Mammary epithelial cell (primary cell): ENCODE measurements at regions of chr2 and their contacts with region 1.

Region 1: DNA sequence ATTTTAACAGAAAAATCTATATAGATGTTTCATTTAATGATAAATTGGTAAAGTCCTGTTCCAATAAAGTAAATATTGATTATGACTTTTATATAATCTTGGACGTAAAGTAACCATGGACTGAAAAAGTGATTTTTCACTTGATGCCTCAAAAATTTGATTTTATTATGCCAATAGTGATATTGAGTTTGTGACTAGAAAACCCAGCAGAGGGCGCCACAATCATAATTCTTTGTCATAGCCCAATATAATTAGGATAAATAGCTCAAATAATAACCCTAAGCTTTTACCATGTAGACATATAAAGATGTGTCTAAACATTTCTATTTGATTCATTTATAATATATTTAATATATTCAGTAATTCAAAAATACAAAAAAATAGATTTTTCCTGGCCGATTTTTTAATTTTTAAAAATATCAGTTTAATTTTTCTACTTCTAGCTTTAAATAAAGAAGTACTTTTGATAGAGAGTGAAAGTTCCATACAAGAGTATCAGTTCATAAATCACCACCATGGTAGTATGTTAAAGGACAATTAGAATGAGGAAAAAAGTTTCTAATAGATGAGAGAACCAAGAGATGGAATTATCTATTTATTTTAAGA is 30.7 kb downstream of the CAMKMT start:
- DNase-seq: peak; percentile 2
- H3K4me3 ChIP-seq: no peak overlapping the region
- H3K27ac ChIP-seq: no peak overlapping the region
- H3K4me1 ChIP-seq: no peaks in the 10 kb centered on the region
- H3K27me3 ChIP-seq: no peaks in the 10 kb centered on the region
- CTCF ChIP-seq: peak; percentile 58 to 71

Region 2: DNA sequence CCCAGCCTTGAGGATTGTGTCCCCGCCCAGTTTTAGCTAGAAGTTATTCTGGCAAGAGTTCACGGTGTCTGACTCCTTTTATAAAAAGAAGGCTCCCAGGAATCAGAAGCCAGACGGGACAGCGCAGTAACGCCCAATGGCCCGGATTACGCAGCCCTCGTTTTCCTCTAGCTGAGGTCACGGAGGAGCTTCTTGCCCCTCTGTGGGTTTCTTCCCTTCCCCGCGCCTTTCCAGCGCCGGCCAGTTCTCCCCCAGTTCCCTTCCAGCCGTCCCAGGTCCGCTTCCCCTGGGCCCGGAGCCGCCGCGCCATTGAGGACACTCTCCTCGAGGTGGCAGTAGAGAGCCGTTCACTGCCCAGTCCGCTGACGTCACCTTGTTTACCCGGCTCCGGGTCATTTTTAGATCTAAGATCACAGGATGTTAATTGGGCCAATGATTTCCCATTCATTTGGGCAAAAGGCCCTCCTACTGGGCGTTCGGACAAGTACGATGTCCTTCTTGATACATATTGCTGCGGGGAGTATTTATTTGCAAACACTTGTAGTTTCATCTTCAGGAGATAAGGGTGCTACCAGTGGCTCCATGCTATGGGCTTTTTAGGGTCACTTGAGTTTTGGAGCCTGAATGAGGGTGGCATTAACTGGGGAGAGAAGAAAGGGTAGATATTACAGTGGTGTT is 305.3 kb before region 1 on chr2:
- CTCF ChIA-PET with region 1: no interaction called
- dilution Hi-C with region 1: no loop called
- in situ Hi-C with region 1: no loop called
- intact Hi-C with region 1: loop called (anchors 1 kb)
- DNase-seq: peak; percentile 56
- H3K4me3 ChIP-seq: peak overlapping the region in 1 of 3 experiments; percentile 16
- H3K27ac ChIP-seq: no peak overlapping the region
- H3K4me1 ChIP-seq: no peaks in the 10 kb centered on the region
- H3K27me3 ChIP-seq: no peaks in the 10 kb centered on the region
- CTCF ChIP-seq: peak; percentile 86 to 94

Region 3: DNA sequence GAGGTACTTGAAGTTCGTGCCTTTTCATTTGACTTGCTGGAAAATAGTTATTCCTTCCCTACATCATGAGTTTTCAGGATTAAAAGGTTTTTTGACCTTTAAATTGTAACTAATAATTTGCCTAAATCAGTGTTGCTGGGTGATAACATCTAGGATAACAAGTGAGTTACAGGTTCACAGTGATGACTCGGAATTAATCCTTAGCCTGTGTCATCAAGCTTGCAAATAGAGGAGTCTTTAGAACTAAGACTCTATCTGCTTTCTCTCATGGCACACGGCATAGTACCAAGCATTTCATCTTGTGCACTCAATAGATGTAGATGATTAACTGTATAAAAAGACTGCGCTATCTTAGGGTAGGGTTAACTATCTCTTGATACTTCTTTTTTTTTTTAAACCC is 48.8 kb after region 1 on chr2:
- CTCF ChIA-PET with region 1: interaction called, 4 read pairs
- dilution Hi-C with region 1: loop called (anchors 10 kb)
- in situ Hi-C with region 1: no loop called
- intact Hi-C with region 1: no loop called
- DNase-seq: peak; percentile 35
- H3K4me3 ChIP-seq: no peak overlapping the region
- H3K27ac ChIP-seq: no peak overlapping the region
- H3K4me1 ChIP-seq: no peaks in the 10 kb centered on the region
- H3K27me3 ChIP-seq: no peaks in the 10 kb centered on the region
- CTCF ChIP-seq: no peak

Region 4: GRCh38 chr2:44495544-44495943 is 103.1 kb after region 1 on chr2:
- CTCF ChIA-PET with region 1: no interaction called
- dilution Hi-C with region 1: no loop called
- in situ Hi-C with region 1: no loop called
- intact Hi-C with region 1: no loop called
- DNase-seq: no peak
- H3K4me3 ChIP-seq: no peak overlapping the region
- H3K27ac ChIP-seq: no peak overlapping the region
- H3K4me1 ChIP-seq: no peaks in the 10 kb centered on the region
- H3K27me3 ChIP-seq: no peaks in the 10 kb centered on the region
- CTCF ChIP-seq: no peak

Region 5: DNA sequence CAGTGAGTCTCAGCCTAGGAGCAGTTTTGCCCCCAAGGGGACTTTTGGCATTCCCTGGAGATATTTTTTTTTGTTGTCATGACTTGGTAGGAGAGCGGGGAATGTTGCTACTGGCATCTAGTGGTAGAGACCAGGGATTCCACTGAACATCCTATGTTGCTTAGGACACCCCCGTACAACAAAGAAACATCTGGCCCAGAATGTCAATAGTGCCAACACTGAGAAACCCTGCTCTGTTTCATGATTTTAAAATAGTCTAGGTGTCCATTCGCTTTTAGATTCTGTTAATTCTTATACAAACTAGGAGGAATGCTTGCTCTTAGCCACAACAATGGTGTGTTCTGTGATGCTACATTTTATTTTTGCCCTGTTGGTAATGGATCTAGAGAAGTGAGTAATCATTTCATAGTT is 323.2 kb after region 1 on chr2:
- CTCF ChIA-PET with region 1: no interaction called
- dilution Hi-C with region 1: no loop called
- in situ Hi-C with region 1: no loop called
- intact Hi-C with region 1: loop called (anchors 2 kb)
- DNase-seq: peak; percentile 56
- H3K4me3 ChIP-seq: no peak overlapping the region
- H3K27ac ChIP-seq: no peak overlapping the region
- H3K4me1 ChIP-seq: no peaks in the 10 kb centered on the region
- H3K27me3 ChIP-seq: no peaks in the 10 kb centered on the region
- CTCF ChIP-seq: peak; percentile 50 to 82

Region 6: DNA sequence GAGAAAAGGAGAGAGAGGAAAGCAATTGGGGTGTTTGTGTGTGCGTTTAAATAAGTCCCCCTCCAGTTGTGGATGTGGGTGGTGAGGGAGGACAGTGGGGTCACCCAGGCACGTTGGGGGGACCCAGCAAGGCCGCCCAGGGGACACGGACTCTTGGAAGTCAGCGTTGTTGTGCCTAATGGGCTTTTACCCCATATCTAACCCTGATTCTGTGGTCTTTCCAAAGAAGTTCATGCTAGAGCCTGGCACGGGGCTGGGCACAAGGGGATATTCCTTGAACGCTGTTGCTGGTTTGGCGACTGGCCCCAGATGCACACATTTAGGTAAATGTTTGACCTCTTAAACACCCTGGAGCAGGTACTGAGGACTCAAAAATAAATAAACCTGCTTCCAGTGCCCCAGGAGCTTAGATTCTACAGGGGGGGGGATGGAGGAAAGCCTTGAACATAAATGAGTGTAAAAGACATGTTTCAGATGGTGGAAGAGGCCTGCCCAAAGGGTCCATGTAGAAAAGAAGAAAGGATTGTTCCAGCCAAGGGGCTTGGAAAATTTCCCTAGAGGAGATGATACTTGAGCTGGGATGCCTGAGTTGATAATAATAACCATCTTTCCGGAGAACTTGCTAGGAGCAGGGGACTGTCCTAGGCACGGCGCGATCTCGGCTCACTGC is 451.3 kb after region 1 on chr2:
- CTCF ChIA-PET with region 1: interaction called, 12 read pairs
- dilution Hi-C with region 1: no loop called
- in situ Hi-C with region 1: no loop called
- intact Hi-C with region 1: no loop called
- DNase-seq: no peak
- H3K4me3 ChIP-seq: no peak overlapping the region
- H3K27ac ChIP-seq: no peak overlapping the region
- H3K4me1 ChIP-seq: no peaks in the 10 kb centered on the region
- H3K27me3 ChIP-seq: peaks cover 4% of the 10 kb centered on the region
- CTCF ChIP-seq: no peak

Region 7: GRCh38 chr2:44974064-44974715 is 581.7 kb after region 1 on chr2:
- CTCF ChIA-PET with region 1: no interaction called
- dilution Hi-C with region 1: no loop called
- in situ Hi-C with region 1: no loop called
- intact Hi-C with region 1: loop called (anchors 5 kb)
- DNase-seq: peak; percentile 53
- H3K4me3 ChIP-seq: no peak overlapping the region
- H3K27ac ChIP-seq: no peak overlapping the region
- H3K4me1 ChIP-seq: peaks cover 5% of the 10 kb centered on the region
- H3K27me3 ChIP-seq: no peaks in the 10 kb centered on the region
- CTCF ChIP-seq: peak; percentile 54 to 78